Posterior vena cava (tissue), 2 donors: ENCODE measurements at regions of chr5 and their contacts with region 1.

Region 1: DNA sequence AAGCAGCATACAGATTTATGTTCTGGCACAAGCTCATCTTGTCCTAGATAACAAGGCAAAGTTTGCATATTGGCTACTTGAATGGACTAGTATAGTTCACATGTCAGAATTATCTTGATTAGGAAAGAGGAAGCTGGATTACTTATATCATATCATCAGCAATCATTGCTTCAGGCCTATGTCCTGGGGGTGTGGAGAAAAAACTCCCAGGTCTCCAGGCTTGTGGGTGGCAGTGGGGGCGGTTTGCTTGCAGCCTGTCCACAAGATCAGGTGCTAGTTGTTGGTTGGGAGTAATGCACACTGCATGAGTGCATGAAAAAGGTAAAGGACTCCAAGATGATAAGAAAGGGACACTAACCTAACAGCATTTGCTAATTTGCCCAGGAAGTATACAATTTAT is 326.4 kb upstream of the PDE4D start:
- DNase-seq: no peak

Region 2: DNA sequence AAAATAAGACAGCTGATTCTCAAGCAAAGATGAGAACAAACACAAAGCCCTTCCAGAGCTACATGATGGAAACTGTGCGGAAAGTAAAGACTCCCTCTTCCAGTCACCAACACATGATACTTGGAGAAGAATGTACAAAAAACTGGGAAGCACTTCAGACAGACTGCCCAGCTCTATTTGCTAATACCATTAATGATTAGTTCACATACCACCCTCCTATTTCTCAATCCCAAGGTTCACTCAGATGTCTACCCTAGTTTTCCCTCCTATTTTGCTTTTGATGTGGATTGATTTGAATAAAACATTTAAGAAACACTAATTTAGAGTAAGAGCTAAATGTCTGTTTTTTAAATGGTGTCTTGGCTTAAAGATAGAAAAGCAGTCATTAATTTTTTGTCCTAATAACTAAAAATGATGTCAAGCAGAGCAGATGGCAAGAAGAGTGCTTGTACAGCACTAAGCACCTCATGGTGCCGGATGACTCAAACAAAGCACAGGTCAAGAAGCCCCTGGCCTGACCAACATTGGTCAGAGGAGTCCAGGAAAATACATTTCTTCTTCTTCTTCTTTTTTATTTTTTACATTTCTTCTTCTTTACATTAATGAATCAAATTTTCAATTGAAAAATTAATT is 965.8 kb before region 1 on chr5:
- intact Hi-C with region 1: loop called in 1 of 2 experiments (anchors 5 kb)
- DNase-seq: no peak

Region 3: DNA sequence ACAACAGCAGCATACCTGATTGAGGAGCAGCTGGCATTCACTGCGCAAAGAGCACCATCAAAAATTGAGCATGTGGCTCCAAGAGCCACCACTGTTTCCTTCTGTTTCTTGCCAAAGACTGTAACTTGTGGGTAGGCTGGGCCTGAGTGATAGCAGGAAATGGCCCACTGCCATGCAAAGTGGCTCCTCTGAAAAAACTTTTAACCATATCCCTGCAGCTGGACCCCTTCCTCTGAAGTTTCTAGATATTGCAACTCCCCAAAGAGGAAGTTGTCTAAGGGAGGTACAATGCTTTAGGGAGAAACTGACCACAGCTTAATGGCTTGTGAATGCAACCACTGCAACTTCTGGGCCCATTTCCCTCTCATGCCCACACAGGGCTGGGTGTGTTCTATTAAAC is 29.0 kb after region 1 on chr5:
- intact Hi-C with region 1: no loop called
- DNase-seq: no peak